ENCODE measurements at regions of chr12 and their contacts with region 1.

Region 1: GRCh38 chr12:108664338-108665258 is 30.9 kb upstream of the SELPLG start:
- DNase-seq: peak; percentile 96
- H3K4me3 Mint-ChIP-seq: peak overlapping the region; percentile 47
- H3K27ac Mint-ChIP-seq: peak overlapping the region; percentile 92
- H3K4me1 Mint-ChIP-seq: peaks cover 34% of the 10 kb centered on the region
- H3K27me3 Mint-ChIP-seq: no peaks in the 10 kb centered on the region
- CTCF ChIP-seq: peak; percentile 83

Region 2: GRCh38 chr12:108562348-108563135 is 102.1 kb before region 1 on chr12 and contains the start of gene ISCU:
- CTCF ChIA-PET with region 1: interaction called, 11 read pairs
- POLR2A ChIA-PET with region 1: interaction called, 5 read pairs
- intact Hi-C with region 1: loop called (anchors 1 kb)
- DNase-seq: peak; percentile 98
- H3K4me3 Mint-ChIP-seq: peak within 1 kb of the TSS; percentile 96
- H3K27ac Mint-ChIP-seq: peak within 1 kb of the TSS; percentile 99
- H3K4me1 Mint-ChIP-seq: peaks cover 22% of the 10 kb centered on the region
- H3K27me3 Mint-ChIP-seq: no peaks in the 10 kb centered on the region
- CTCF ChIP-seq: no peak
- total RNA-seq, gene ISCU: 115 and 125 TPM in 2 replicates

Region 3: GRCh38 chr12:108685469-108686260 is 21.1 kb after region 1 on chr12:
- CTCF ChIA-PET with region 1: interaction called, 73 read pairs
- POLR2A ChIA-PET with region 1: interaction called, 65 read pairs
- intact Hi-C with region 1: loop called (anchors 2 kb)
- DNase-seq: no peak
- H3K4me3 Mint-ChIP-seq: no peak overlapping the region
- H3K27ac Mint-ChIP-seq: peak overlapping the region; percentile 70
- H3K4me1 Mint-ChIP-seq: peaks cover 48% of the 10 kb centered on the region
- H3K27me3 Mint-ChIP-seq: no peaks in the 10 kb centered on the region
- CTCF ChIP-seq: no peak

Region 4: DNA sequence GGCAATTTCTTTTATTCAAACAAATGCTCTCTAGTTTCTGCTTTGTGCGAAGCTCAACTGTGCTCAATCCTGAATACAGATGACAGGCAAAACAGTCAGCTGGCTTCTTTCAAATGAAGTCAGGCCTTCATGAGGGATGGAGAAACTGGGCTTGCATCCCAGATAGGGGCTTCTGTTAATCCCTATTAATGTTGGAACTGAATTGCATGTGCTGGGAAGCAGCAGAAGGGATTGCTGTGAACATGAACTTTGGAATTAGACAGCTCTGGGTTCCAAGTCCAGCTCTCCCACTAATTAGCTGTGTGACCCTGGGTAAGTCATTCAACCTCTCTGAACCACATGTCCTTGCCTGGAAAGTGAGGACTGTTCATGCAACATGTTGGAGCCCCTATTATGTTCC is 87.8 kb after region 1 on chr12:
- CTCF ChIA-PET with region 1: interaction called, 10 read pairs
- POLR2A ChIA-PET with region 1: interaction called, 4 read pairs
- intact Hi-C with region 1: no loop called
- DNase-seq: no peak
- H3K4me3 Mint-ChIP-seq: no peak overlapping the region
- H3K27ac Mint-ChIP-seq: no peak overlapping the region
- H3K4me1 Mint-ChIP-seq: no peaks in the 10 kb centered on the region
- H3K27me3 Mint-ChIP-seq: no peaks in the 10 kb centered on the region
- CTCF ChIP-seq: no peak

Region 5: DNA sequence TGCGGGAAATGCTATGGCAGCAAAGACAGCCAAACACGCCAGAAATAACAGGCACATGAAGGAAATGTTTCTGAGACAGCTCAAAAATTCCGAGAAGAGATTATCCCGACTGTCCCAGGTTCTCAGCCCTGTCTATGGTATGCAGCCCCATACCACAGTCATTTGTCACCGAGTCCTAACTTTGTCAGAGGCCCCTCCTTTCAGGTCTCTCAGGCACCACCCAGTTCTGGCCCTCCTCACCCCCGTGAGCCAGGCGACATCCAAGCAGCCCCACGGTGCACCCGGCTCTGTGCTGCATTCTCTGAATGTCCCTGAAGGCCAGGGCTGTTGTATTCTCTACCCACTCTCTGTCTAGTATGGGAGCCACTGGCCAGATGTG is 168.7 kb after region 1 on chr12:
- CTCF ChIA-PET with region 1: interaction called, 8 read pairs
- POLR2A ChIA-PET with region 1: interaction called, 10 read pairs
- intact Hi-C with region 1: no loop called
- DNase-seq: peak; percentile 75
- H3K4me3 Mint-ChIP-seq: peak overlapping the region; percentile 54
- H3K27ac Mint-ChIP-seq: peak overlapping the region; percentile 83
- H3K4me1 Mint-ChIP-seq: peaks cover 53% of the 10 kb centered on the region
- H3K27me3 Mint-ChIP-seq: no peaks in the 10 kb centered on the region
- CTCF ChIP-seq: no peak

Region 6: GRCh38 chr12:109093022-109093918 is 428.7 kb after region 1 on chr12 and contains the start of gene ALKBH2:
- CTCF ChIA-PET with region 1: interaction called, 3 read pairs
- POLR2A ChIA-PET with region 1: interaction called, 11 read pairs
- intact Hi-C with region 1: loop called (anchors 1 kb)
- DNase-seq: peak; percentile 90
- H3K4me3 Mint-ChIP-seq: peak within 1 kb of the TSS; percentile 83
- H3K27ac Mint-ChIP-seq: peak within 1 kb of the TSS; percentile 85
- H3K4me1 Mint-ChIP-seq: peaks cover 23% of the 10 kb centered on the region
- H3K27me3 Mint-ChIP-seq: no peaks in the 10 kb centered on the region
- CTCF ChIP-seq: peak; percentile 88
- total RNA-seq, gene ALKBH2: 38.9 and 48.9 TPM in 2 replicates

Measured in MCF 10A (cell line).